Calu3 (cell line): ENCODE measurements at regions of chr12 and their contacts with region 1.

Region 1: GRCh38 chr12:100083308-100083707 is 59.4 kb downstream of the BLTP3B start:
- DNase-seq: no peak
- H3K4me3 Mint-ChIP-seq: no peak overlapping the region
- H3K27ac Mint-ChIP-seq: no peak overlapping the region
- H3K4me1 Mint-ChIP-seq: no peaks in the 10 kb centered on the region
- H3K27me3 Mint-ChIP-seq: no peaks in the 10 kb centered on the region
- CTCF ChIP-seq: no peak

Region 2: GRCh38 chr12:100101000-100101399 is 17.7 kb after region 1 on chr12:
- CTCF ChIA-PET with region 1: interaction called, 11 read pairs
- intact Hi-C with region 1: no loop called
- DNase-seq: no peak
- H3K4me3 Mint-ChIP-seq: no peak overlapping the region
- H3K27ac Mint-ChIP-seq: no peak overlapping the region
- H3K4me1 Mint-ChIP-seq: no peaks in the 10 kb centered on the region
- H3K27me3 Mint-ChIP-seq: no peaks in the 10 kb centered on the region
- CTCF ChIP-seq: no peak

Region 3: DNA sequence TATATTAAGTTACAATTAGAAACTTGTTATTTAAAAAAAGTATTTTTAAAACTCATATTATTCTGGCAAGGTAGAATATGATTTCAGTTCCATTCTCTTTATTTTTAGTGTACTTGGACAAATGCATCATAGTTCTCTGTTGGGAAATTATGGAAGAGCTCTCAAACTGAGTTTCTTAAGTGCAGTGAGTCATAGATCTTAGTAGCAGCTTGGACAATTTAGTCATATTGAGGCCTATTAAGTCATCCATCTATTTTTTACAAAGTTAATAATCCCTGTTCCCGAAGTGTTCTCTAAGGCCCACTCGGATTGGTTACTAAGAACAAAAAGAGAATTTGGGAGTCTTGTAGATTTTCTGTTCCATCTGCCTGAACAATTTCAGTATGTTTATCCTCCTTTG is 825.2 kb after region 1 on chr12:
- CTCF ChIA-PET with region 1: no interaction called
- intact Hi-C with region 1: no loop called
- DNase-seq: no peak
- H3K4me3 Mint-ChIP-seq: no peak overlapping the region
- H3K27ac Mint-ChIP-seq: no peak overlapping the region
- H3K4me1 Mint-ChIP-seq: no peaks in the 10 kb centered on the region
- H3K27me3 Mint-ChIP-seq: no peaks in the 10 kb centered on the region
- CTCF ChIP-seq: no peak